Activated B cell treated with CpG ODN at 0.5 μM for 24 hours (primary cell): ENCODE measurements at regions of chr12 and their contacts with region 1.

Region 1: DNA sequence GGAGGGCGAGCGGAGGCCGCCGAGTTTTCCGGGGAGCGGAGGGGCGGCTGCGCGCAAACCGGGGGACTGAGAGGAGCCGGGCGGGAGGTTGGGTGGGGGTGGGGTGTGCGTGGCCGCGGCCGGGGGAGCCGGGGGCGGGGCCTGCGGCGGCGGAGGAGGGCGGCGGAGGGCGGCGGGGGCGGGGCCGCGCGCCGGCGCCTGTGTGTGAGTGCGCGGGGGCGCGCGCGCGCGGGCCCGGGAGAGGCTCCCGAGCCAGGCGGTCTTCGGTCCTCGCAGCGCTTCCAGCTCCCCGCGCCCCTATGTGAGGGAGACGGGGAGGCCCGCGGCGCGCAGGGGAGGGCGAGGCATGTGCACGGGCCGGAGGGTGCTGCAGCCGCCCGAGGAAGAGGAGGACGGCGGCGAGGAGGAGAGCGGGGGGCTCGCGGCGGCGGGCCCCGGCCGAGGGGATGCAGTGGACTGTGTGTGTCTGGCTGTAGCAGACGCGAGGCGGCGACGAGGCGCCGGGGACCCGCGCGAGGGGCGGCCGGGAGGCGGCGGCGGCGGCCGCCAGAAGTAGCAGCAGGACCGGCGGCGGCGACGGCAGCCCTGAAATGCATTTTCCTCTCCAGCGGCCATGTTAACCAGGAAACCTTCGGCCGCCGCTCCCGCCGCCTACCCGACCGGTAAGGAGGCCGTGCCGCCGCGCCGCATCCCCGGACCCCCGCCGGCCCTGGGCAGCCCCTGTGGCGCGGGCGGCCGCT is at the start of gene DYRK2:
- DNase-seq: peak; percentile 78
- ATAC-seq: peak; percentile 64
- H3K4me3 Mint-ChIP-seq: peak within 1 kb of the TSS; percentile 97
- H3K27ac Mint-ChIP-seq: peak within 1 kb of the TSS; percentile 87
- H3K4me1 Mint-ChIP-seq: peaks cover 33% of the 10 kb centered on the region
- H3K27me3 Mint-ChIP-seq: no peaks in the 10 kb centered on the region
- CTCF ChIP-seq: no peak
- total RNA-seq, gene DYRK2: 37.6 and 40.3 TPM in 2 replicates

Region 2: DNA sequence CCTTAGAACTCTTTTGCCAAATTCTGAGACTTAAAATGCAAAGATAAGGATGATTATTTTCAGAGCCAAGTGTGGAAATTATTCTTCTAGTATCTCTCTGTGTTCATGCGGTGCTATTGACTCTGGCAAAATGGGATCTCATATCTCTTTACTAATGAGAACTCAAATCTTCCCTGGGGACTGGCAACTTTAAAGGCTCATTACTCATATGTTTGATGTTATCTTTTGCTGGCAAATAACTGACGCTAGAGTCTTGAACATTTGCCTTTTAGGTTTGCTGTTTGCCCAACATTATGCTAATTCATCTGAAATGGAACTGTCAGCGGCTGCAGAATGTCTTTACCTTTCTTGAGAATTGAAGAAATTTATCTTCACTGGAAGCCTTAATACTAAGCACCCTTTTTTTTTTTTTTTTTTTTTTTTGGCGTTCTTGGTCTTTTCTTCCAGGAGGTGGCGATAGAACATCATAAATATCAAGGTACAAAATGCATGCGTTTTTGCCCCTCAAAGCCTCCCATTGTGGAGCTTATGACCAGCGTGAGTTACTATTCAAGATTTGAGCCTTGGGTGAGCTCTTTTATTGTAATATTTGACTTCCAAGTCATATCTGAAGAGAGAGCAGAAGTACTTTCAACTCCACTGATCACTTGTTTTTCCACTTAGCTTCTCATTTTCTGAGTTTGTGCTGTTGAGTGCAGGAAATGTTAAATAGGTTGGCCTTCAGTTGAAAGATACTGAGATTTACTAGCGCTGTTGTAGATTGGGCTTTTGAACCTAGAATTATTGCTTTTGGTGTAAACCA is 292.9 kb before region 1 on chr12:
- CTCF ChIA-PET with region 1: interaction called, 4 read pairs
- POLR2A ChIA-PET with region 1: interaction called, 3 read pairs
- intact Hi-C with region 1: loop called (anchors 5 kb)
- DNase-seq: no peak
- ATAC-seq: peak; percentile 54
- H3K4me3 Mint-ChIP-seq: no peak overlapping the region
- H3K27ac Mint-ChIP-seq: no peak overlapping the region
- H3K4me1 Mint-ChIP-seq: peaks cover 5% of the 10 kb centered on the region
- H3K27me3 Mint-ChIP-seq: no peaks in the 10 kb centered on the region
- CTCF ChIP-seq: no peak

Region 3: GRCh38 chr12:67498991-67499390 is 149.7 kb before region 1 on chr12:
- CTCF ChIA-PET with region 1: no interaction called
- POLR2A ChIA-PET with region 1: no interaction called
- intact Hi-C with region 1: no loop called
- DNase-seq: no peak
- ATAC-seq: no peak
- H3K4me3 Mint-ChIP-seq: no peak overlapping the region
- H3K27ac Mint-ChIP-seq: no peak overlapping the region
- H3K4me1 Mint-ChIP-seq: peaks cover 2% of the 10 kb centered on the region
- H3K27me3 Mint-ChIP-seq: peaks cover 2% of the 10 kb centered on the region
- CTCF ChIP-seq: no peak

Region 4: GRCh38 chr12:67617619-67618018 is 31.1 kb before region 1 on chr12:
- CTCF ChIA-PET with region 1: no interaction called
- POLR2A ChIA-PET with region 1: interaction called, 11 read pairs
- intact Hi-C with region 1: no loop called
- DNase-seq: no peak
- ATAC-seq: no peak
- H3K4me3 Mint-ChIP-seq: no peak overlapping the region
- H3K27ac Mint-ChIP-seq: peak overlapping the region; percentile 26
- H3K4me1 Mint-ChIP-seq: peaks cover 18% of the 10 kb centered on the region
- H3K27me3 Mint-ChIP-seq: no peaks in the 10 kb centered on the region
- CTCF ChIP-seq: no peak

Region 5: GRCh38 chr12:67698672-67699581 is 50.2 kb after region 1 on chr12:
- CTCF ChIA-PET with region 1: no interaction called
- POLR2A ChIA-PET with region 1: interaction called, 5 read pairs
- intact Hi-C with region 1: loop called (anchors 1 kb)
- DNase-seq: no peak
- ATAC-seq: peak; percentile 87
- H3K4me3 Mint-ChIP-seq: peak overlapping the region; percentile 74
- H3K27ac Mint-ChIP-seq: peak overlapping the region; percentile 86
- H3K4me1 Mint-ChIP-seq: peaks cover 43% of the 10 kb centered on the region
- H3K27me3 Mint-ChIP-seq: peaks cover 4% of the 10 kb centered on the region
- CTCF ChIP-seq: no peak

Region 6: GRCh38 chr12:67772276-67773169 is 123.8 kb after region 1 on chr12:
- CTCF ChIA-PET with region 1: no interaction called
- POLR2A ChIA-PET with region 1: no interaction called
- intact Hi-C with region 1: no loop called
- DNase-seq: no peak
- ATAC-seq: no peak
- H3K4me3 Mint-ChIP-seq: no peak overlapping the region
- H3K27ac Mint-ChIP-seq: no peak overlapping the region
- H3K4me1 Mint-ChIP-seq: no peaks in the 10 kb centered on the region
- H3K27me3 Mint-ChIP-seq: peaks cover 5% of the 10 kb centered on the region
- CTCF ChIP-seq: no peak

Region 7: GRCh38 chr12:67943226-67943892 is 294.7 kb after region 1 on chr12:
- CTCF ChIA-PET with region 1: interaction called, 9 read pairs
- POLR2A ChIA-PET with region 1: interaction called, 4 read pairs
- intact Hi-C with region 1: loop called (anchors 1 kb)
- DNase-seq: no peak
- ATAC-seq: peak; percentile 67
- H3K4me3 Mint-ChIP-seq: no peak overlapping the region
- H3K27ac Mint-ChIP-seq: no peak overlapping the region
- H3K4me1 Mint-ChIP-seq: peaks cover 2% of the 10 kb centered on the region
- H3K27me3 Mint-ChIP-seq: peaks cover 3% of the 10 kb centered on the region
- CTCF ChIP-seq: no peak

Region 8: GRCh38 chr12:68040450-68041075 is 391.9 kb after region 1 on chr12:
- CTCF ChIA-PET with region 1: no interaction called
- POLR2A ChIA-PET with region 1: no interaction called
- intact Hi-C with region 1: loop called (anchors 5 kb)
- DNase-seq: no peak
- ATAC-seq: peak; percentile 65
- H3K4me3 Mint-ChIP-seq: peak overlapping the region; percentile 25
- H3K27ac Mint-ChIP-seq: peak overlapping the region; percentile 19
- H3K4me1 Mint-ChIP-seq: peaks cover 19% of the 10 kb centered on the region
- H3K27me3 Mint-ChIP-seq: no peaks in the 10 kb centered on the region
- CTCF ChIP-seq: peak; percentile 95